Activated CD8-positive, alpha-beta T cell treated with anti-CD3 and anti-CD28 coated beads for 36 hours (primary cell): ENCODE measurements at regions of chr3 and their contacts with region 1.

Region 1: GRCh38 chr3:45064512-45065372 is 38.6 kb downstream of the CLEC3B start:
- DNase-seq: peak; percentile 82
- ATAC-seq: peak; percentile 83
- H3K4me3 Mint-ChIP-seq: peak overlapping the region; percentile 28
- H3K27ac Mint-ChIP-seq: peak overlapping the region; percentile 73
- H3K4me1 Mint-ChIP-seq: peaks cover 26% of the 10 kb centered on the region
- H3K27me3 Mint-ChIP-seq: peaks cover 1% of the 10 kb centered on the region
- CTCF ChIP-seq: no peak

Region 2: DNA sequence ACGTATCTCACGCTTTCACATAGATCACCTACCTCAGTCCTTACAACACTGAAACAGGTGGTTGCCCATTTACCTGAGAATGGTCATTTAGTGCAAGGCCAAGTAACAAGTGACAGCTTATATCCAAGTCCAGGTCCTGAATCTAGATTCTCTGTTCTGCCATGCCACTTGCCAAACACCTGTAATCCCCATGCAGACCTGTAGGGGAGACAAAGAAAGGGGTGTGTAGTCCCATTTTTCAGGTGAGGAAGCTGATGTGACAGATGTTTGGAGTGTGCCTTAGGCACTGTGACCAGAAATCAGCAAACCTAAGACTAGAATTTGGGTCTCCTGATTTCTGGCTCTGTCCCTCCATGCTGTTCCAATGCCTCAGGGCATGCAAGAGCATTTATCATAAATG is 403.6 kb before region 1 on chr3:
- CTCF ChIA-PET with region 1: no interaction called
- POLR2A ChIA-PET with region 1: no interaction called
- intact Hi-C with region 1: no loop called
- DNase-seq: no peak
- ATAC-seq: no peak
- H3K4me3 Mint-ChIP-seq: no peak overlapping the region
- H3K27ac Mint-ChIP-seq: no peak overlapping the region
- H3K4me1 Mint-ChIP-seq: no peaks in the 10 kb centered on the region
- H3K27me3 Mint-ChIP-seq: no peaks in the 10 kb centered on the region
- CTCF ChIP-seq: no peak

Region 3: DNA sequence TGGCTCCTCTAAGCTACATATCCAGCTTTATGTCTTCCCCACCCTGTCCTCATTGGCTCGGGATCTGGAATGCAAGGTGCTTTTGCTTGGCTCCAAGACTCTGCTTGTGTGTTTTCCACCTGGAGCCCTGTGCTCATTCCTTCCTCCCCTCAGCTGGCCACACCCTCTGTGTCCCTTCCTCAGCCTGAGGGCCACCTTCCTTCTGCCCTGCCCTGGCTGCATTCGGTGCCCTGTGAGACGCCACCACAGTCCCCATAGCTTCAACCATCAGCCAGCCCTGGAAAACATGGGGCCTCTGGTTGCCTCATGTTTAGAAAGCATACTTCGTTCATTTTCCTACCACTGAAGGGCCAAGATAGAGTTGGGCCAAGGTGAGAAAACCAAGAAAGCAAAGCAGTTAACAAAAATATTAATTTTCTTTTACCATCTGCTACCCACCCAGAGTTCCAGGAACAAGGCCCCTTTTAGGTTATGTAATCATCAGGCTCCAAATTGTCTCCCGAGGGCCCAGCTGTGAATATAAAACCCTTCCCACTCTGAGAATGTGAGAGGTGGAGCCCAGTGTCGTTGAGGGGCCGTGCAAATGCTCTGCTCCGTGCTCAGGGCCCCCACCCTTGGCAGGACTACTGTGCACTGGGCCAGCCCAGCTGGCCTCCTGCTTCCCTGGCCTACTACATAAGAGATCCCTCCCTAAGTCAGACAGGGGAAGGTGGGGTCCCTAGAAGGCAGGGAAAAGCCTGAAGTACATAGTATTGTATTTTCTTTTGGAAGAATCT is 43.4 kb before region 1 on chr3:
- CTCF ChIA-PET with region 1: no interaction called
- POLR2A ChIA-PET with region 1: no interaction called
- intact Hi-C with region 1: no loop called
- DNase-seq: no peak
- ATAC-seq: no peak
- H3K4me3 Mint-ChIP-seq: no peak overlapping the region
- H3K27ac Mint-ChIP-seq: no peak overlapping the region
- H3K4me1 Mint-ChIP-seq: peaks cover 13% of the 10 kb centered on the region
- H3K27me3 Mint-ChIP-seq: no peaks in the 10 kb centered on the region
- CTCF ChIP-seq: no peak

Region 4: GRCh38 chr3:45078910-45079522 is 14.3 kb after region 1 on chr3:
- CTCF ChIA-PET with region 1: no interaction called
- POLR2A ChIA-PET with region 1: no interaction called
- intact Hi-C with region 1: no loop called
- DNase-seq: no peak
- ATAC-seq: no peak
- H3K4me3 Mint-ChIP-seq: no peak overlapping the region
- H3K27ac Mint-ChIP-seq: no peak overlapping the region
- H3K4me1 Mint-ChIP-seq: no peaks in the 10 kb centered on the region
- H3K27me3 Mint-ChIP-seq: peaks cover 5% of the 10 kb centered on the region
- CTCF ChIP-seq: no peak

Region 5: GRCh38 chr3:45109771-45110508 is 45.2 kb after region 1 on chr3:
- CTCF ChIA-PET with region 1: no interaction called
- POLR2A ChIA-PET with region 1: no interaction called
- intact Hi-C with region 1: loop called (anchors 5 kb)
- DNase-seq: peak; percentile 48
- ATAC-seq: peak; percentile 55
- H3K4me3 Mint-ChIP-seq: no peak overlapping the region
- H3K27ac Mint-ChIP-seq: no peak overlapping the region
- H3K4me1 Mint-ChIP-seq: peaks cover 69% of the 10 kb centered on the region
- H3K27me3 Mint-ChIP-seq: peaks cover 3% of the 10 kb centered on the region
- CTCF ChIP-seq: no peak